Endothelial cell of umbilical vein (primary cell): ENCODE measurements at regions of chr16 and their contacts with region 1.

Region 1: DNA sequence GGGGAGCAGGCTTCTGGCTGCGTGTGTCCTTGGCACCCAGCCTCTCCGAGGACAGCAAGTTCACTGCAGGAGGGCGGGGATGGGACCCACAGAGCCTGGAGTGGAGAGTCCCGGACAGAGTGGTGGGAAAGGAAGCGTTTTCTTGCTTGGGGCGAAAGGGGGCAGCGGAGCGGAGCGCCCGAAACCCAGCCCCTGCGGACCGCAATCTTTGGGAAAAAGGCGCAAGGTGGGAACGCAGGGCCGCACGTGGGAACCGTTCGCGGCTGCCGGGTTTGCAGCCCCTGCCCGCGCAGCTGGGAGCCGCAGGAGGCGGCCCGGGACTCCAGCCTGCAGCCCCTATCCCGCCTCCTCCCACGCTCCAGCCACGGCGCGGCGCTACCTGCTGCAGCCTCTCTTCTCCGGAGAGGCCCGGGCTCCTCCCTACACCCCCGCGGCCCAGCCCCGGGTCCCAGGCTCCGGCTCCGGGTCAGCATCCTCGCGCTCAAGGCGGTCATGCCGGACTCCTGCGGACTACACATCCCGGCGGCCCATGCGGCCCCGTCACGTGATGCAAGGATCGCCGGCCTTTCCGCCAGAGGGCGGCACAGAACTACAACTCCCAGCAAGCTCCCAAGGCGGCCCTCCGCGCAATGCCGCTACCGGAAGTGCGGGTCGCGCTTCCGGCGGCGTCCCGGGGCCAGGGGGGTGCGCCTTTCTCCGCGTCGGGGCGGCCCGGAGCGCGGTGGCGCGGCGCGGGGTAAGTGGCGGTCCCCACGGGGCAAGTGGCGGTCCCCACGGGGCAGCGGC is at the starts of genes NTHL1 and TSC2:
- DNase-seq: peak; percentile 97
- H3K4me3 ChIP-seq: peak within 1 kb of the TSS; percentile 67 to 82 (median 72)
- H3K27ac ChIP-seq: no peak within 1 kb of the TSS
- H3K4me1 ChIP-seq: peaks cover 35% of the 10 kb centered on the region
- H3K27me3 ChIP-seq: no peaks in the 10 kb centered on the region
- CTCF ChIP-seq: peak in 1 of 2 donors; percentile 35
- POLR2A ChIP-seq: peak; percentile 88
- total RNA-seq, gene NTHL1: 35.3 and 39.8 TPM in 2 replicates
- total RNA-seq, gene TSC2: 144 TPM in 2 replicates

Region 2: GRCh38 chr16:2033057-2033908 is 14.2 kb before region 1 on chr16:
- CTCF ChIA-PET with region 1: interaction called, 20 read pairs
- POLR2A ChIA-PET with region 1: no interaction called
- dilution Hi-C with region 1: no loop called
- intact Hi-C with region 1: loop called (anchors 1 kb)
- DNase-seq: peak; percentile 70
- H3K4me3 ChIP-seq: peak overlapping the region in 1 of 3 experiments; percentile 15
- H3K27ac ChIP-seq: peak overlapping the region; percentile 77
- H3K4me1 ChIP-seq: peaks cover 50% of the 10 kb centered on the region
- H3K27me3 ChIP-seq: no peaks in the 10 kb centered on the region
- CTCF ChIP-seq: no peak
- POLR2A ChIP-seq: peak; percentile 35